ENCODE measurements at regions of chr2 and their contacts with region 1.

Region 1: GRCh38 chr2:156892467-156893281 is 364.8 kb upstream of the GALNT5 start:
- ATAC-seq: peak; percentile 88 to 96 (median 93)
- H3K4me3 ChIP-seq: peak overlapping the region; percentile 23 to 33 (median 33)
- H3K27ac ChIP-seq: no peak overlapping the region
- H3K4me1 ChIP-seq: peaks cover 0 to 9% of the 10 kb centered on the region in 2 donors

Region 2: DNA sequence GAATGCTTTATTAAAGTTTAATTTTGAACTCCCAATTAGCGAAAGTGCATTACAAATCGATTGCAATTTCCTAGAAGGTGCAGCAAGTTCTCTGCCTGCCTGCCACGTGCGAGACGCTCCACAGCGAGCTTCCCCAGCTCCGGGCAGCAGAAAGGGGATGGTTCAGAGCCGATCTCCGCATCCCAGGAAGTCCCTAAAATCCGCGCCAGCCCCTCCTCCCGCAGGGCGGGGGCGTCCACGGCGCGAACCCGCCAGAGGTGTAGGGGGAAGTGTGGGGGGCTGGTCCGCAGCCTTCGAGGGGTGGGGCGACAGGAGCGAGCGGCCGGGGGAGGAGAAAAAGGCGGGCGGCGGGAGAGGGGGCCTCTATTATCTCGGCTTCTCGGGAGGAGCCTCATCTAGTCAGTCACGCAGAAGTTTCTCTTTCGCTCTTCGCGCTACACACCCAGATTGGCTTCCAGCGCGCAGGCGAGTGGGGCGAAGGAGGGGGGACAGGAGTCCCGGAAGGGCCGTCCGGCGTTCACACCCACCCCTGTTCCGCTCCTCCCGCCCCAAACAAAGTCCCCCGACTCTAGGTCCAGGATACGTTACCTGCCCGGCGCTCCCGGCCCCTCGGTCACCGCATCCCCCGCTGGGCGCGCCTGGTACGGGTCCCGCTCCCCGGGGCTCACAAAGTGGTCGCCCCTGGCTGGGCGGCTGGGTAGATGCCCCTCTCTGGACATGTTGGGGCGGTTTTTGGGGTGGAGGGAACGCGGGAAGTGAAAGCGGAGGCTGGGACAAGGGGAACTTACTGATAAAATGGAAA is 551.0 kb before region 1 on chr2:
- in situ Hi-C with region 1: loop called in 2 of 9 experiments (anchors 25 kb)
- ATAC-seq: peak; percentile 63 to 82 (median 70)
- H3K4me3 ChIP-seq: peak overlapping the region; percentile 59 to 93 (median 80)
- H3K27ac ChIP-seq: peak overlapping the region; percentile 9 to 77
- H3K4me1 ChIP-seq: peaks cover 0 to 3% of the 10 kb centered on the region in 2 donors

Region 3: DNA sequence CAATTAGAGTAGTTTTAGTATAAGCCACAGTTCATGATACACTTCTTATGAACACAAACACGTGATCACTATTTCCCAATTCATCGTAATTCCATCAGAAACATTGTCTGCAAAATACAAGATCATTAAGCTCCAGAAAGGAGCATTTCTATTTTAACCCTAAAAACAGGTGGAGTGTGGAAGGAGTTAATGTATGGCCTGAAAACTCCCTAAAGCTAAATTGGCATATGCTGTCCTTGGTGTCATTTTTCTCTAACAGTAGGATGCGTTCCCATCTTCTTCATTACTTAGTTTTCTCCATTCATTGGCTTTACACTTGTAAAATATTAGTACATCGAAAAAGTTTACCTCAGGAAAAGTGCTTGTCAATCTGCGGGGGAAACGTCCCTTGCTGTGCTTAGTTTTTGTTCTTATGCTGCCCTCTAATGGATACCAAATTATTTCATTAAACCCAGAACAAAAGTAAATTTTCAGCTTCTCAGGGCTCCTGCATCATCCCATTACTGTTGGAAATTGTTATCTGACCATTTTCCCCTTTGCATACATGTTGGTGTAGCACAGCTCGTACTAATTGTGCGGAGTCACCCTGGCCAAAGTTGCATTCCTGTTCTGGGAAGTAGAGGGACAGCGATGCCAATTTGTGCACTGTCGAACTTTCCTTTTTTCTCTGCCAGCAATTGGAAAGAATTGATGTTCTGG is 303.1 kb before region 1 on chr2:
- in situ Hi-C with region 1: loop called in 2 of 9 experiments (anchors 10 to 25 kb)
- ATAC-seq: peak in 5 of 8 experiments; percentile 30 to 82 (median 73)
- H3K4me3 ChIP-seq: no peak overlapping the region
- H3K27ac ChIP-seq: no peak overlapping the region
- H3K4me1 ChIP-seq: peaks cover 3 to 15% of the 10 kb centered on the region in 2 donors

Region 4: GRCh38 chr2:156826341-156826933 is 66.2 kb before region 1 on chr2:
- in situ Hi-C with region 1: no loop called
- ATAC-seq: peak in 2 of 8 experiments; percentile 18 to 37
- H3K4me3 ChIP-seq: no peak overlapping the region
- H3K27ac ChIP-seq: no peak overlapping the region
- H3K4me1 ChIP-seq: no peaks in the 10 kb centered on the region

Region 5: DNA sequence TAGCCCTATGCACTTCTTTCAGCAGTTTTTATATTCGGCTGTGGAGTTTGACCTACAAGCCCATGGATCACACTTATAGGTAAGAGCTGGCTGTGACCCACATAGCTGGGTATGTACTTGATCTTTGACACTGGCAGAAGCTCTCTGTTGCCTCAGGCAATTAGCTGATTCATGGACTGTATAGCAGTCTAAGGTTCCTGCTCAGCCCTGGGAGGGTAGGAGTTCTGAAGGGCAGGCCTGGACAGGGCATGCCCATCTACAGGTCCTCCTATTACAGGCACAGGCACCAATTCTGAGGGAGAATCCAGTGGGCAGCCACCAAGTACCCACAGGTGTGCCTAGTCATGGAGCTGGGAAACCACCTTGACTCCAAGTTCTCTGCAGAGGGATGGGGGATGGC is 63.0 kb after region 1 on chr2:
- in situ Hi-C with region 1: no loop called
- ATAC-seq: peak in 2 of 8 experiments; percentile 57 to 58
- H3K4me3 ChIP-seq: no peak overlapping the region
- H3K27ac ChIP-seq: no peak overlapping the region
- H3K4me1 ChIP-seq: no peaks in the 10 kb centered on the region

Region 6: DNA sequence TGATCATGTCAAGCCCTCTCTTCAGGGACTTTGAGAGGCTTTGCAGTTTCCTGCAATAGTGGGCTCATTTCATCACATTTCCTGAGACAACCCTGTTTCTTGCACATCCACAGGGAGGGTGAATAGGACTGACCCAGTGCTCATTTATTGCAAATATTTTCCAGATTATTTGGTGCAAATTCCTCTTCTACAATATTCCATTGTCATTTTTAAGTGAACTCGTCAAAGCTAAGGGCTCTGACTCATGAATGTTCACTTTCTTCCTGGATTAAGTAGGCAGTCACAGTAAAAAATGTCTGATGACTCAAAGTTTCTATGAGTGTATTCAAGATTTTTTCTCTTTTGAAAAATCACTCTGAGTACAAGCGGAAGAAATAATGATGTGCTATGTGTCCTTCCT is 139.3 kb after region 1 on chr2:
- in situ Hi-C with region 1: no loop called
- ATAC-seq: peak in 5 of 8 experiments; percentile 37 to 91 (median 68)
- H3K4me3 ChIP-seq: no peak overlapping the region
- H3K27ac ChIP-seq: no peak overlapping the region
- H3K4me1 ChIP-seq: no peaks in the 10 kb centered on the region

Region 7: DNA sequence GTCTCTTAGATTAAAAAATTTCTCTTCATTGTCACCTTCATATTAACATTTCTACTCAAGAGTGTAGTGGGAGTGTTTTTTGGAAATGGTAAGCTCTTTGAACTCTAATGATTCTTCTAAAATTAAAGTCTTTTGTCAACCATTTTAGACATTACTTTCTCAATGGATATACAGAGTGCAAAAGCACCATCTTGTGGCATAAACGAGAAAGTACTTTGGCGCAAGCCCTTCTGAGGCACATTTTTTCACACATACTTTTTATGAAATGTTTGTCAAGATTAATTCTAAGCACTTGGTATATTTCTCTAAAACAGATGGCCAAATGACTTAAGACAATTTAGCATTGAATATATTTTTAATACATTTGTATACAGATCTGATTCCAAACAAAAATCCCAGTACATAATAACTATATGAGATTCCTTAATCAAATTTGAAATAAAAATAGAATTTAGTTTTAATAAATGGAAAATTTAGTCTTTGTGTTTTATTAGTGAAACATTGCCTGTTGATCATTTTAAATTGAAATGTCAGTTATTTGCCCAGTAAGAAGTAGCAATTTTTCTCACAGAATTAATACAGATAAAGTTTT is 301.5 kb after region 1 on chr2:
- in situ Hi-C with region 1: loop called in 1 of 9 experiments (anchors 25 kb)
- ATAC-seq: peak in 3 of 8 experiments; percentile 57 to 60 (median 57)
- H3K4me3 ChIP-seq: no peak overlapping the region
- H3K27ac ChIP-seq: no peak overlapping the region
- H3K4me1 ChIP-seq: no peaks in the 10 kb centered on the region